ENCODE measurements at regions of chr9 and their contacts with region 1.

Region 1: GRCh38 chr9:7799234-7799943 is at the start of gene DMAC1:
- DNase-seq: peak; percentile 59
- ATAC-seq: peak; percentile 93
- H3K4me3 Mint-ChIP-seq: peak within 1 kb of the TSS; percentile 91
- H3K27ac Mint-ChIP-seq: peak within 1 kb of the TSS; percentile 96
- H3K4me1 Mint-ChIP-seq: peaks cover 20% of the 10 kb centered on the region
- H3K27me3 Mint-ChIP-seq: no peaks in the 10 kb centered on the region
- CTCF ChIP-seq: no peak
- total RNA-seq, gene DMAC1: 35.3 and 44.0 TPM in 2 replicates

Region 2: DNA sequence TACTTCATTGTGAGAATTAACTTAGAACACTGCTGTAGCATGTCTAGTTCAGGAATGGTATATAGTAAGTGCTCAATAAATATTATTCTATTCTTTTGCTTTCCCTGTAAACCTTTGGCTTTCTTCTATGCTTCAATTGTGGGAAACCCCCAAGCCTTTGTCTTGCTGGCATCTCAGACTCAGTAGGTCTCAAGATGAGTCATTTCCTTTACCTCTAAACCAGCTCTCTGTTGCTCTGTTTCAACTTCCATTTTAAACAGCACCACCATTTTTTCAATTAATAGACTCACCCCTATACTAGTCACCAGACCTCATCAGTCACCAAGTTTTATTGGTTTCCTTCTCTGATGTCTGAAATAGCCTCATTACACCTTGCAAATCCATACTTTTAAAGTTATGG is 43.3 kb before region 1 on chr9:
- CTCF ChIA-PET with region 1: no interaction called
- POLR2A ChIA-PET with region 1: no interaction called
- intact Hi-C with region 1: loop called (anchors 1 kb)
- DNase-seq: no peak
- ATAC-seq: peak; percentile 87
- H3K4me3 Mint-ChIP-seq: no peak overlapping the region
- H3K27ac Mint-ChIP-seq: peak overlapping the region; percentile 32
- H3K4me1 Mint-ChIP-seq: peaks cover 6% of the 10 kb centered on the region
- H3K27me3 Mint-ChIP-seq: no peaks in the 10 kb centered on the region
- CTCF ChIP-seq: no peak

Region 3: DNA sequence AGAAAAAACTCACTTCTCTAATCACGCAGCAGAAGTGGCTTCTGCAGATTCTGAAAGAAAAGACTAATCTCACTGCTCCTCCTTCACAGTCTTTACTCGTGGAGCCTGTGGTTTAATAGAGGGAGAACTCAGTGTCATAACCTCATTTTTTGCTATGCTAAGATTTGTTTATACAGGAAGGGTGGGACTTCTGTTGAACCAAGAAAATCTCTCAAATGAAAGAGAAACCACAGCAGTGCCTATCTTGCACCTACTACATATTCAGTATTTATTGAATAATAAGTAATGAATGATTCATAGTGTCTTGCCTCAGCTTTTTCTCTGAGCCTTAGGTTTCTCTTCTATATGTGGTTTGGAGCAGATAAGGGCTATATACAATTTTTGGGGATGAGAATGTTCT is 136.3 kb after region 1 on chr9:
- CTCF ChIA-PET with region 1: no interaction called
- POLR2A ChIA-PET with region 1: no interaction called
- intact Hi-C with region 1: loop called (anchors 10 kb)
- DNase-seq: no peak
- ATAC-seq: peak; percentile 90
- H3K4me3 Mint-ChIP-seq: peak overlapping the region; percentile 62
- H3K27ac Mint-ChIP-seq: peak overlapping the region; percentile 90
- H3K4me1 Mint-ChIP-seq: peaks cover 20% of the 10 kb centered on the region
- H3K27me3 Mint-ChIP-seq: no peaks in the 10 kb centered on the region
- CTCF ChIP-seq: no peak